ENCODE measurements at regions of chr1 and their contacts with region 1.

Region 1: GRCh38 chr1:160607011-160607671 is 27.8 kb upstream of the CD84 start:
- DNase-seq: peak; percentile 59
- H3K4me3 Mint-ChIP-seq: peak overlapping the region; percentile 48
- H3K27ac Mint-ChIP-seq: peak overlapping the region; percentile 75
- H3K4me1 Mint-ChIP-seq: peaks cover 64% of the 10 kb centered on the region
- H3K27me3 Mint-ChIP-seq: no peaks in the 10 kb centered on the region

Region 2: DNA sequence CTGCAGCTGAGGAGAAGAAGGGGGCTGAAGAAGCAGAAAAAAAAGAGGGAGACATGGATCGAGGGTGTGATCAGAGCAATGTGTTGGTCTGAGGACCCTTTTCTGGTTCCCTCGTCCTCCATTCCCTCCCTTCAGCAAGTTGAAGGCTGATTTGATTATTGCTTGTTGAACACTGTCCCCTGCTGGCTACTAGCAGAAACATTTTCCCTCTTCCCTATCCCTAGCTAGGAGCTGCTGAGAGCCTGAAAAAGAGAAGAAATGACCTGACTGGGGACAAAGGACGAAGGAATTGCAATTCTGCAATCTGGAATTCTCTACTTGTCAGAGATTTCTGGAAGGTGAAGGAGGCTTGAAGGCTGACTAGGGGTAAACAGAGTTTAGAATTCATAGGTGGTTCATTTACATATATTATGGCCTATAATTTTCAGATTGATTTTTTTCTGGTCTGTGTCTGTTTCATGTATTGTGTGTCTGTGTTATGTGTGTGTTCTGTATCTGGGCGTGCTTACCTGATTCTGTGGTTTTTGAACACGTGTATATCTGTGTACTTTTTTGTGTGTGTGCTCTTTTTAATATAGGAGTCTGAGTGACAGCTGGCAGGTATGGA is 230.5 kb before region 1 on chr1:
- intact Hi-C with region 1: loop called (anchors 1 kb)
- DNase-seq: peak; percentile 11
- H3K4me3 Mint-ChIP-seq: no peak overlapping the region
- H3K27ac Mint-ChIP-seq: no peak overlapping the region
- H3K4me1 Mint-ChIP-seq: peaks cover 13% of the 10 kb centered on the region
- H3K27me3 Mint-ChIP-seq: no peaks in the 10 kb centered on the region

Region 3: DNA sequence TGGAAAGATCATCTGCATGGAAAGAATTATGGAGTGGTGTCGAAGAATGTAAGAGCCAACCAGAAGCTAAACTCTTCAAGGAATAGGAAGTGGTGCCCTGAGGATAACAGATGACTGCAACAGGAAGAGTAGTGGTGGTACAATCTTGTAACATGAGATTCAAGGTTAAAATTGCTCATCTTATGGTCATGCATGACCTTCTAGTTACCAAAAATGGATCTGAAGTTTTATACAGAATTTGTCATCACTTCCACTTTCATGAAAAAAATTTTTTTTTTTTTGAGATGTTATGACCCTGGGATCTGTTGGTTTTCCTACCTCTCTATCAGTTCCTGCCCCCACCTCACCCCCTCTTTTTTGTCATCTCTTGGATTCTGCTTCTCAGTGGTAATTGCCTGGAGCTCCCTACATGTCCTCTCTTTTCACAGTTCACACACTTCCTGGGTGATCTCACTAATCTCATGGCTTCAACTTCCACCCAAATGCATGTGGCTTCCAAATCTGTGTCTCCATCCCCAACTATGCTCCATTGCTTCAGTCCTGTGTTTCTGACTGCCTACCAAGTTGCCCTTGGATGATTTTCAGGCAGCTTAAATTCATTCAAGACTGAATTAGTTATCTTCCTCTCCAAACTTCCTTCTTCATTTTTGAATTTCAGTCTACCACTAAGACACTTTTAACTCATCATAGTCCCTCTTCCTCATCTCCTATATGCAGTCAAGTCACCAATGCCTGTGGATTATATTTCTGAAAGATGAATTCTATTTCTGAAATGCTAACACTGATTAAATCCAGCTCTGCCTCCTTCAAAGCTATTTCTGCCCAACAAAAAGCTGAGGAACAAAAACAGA is 132.5 kb before region 1 on chr1:
- intact Hi-C with region 1: loop called (anchors 1 kb)
- DNase-seq: no peak
- H3K4me3 Mint-ChIP-seq: no peak overlapping the region
- H3K27ac Mint-ChIP-seq: no peak overlapping the region
- H3K4me1 Mint-ChIP-seq: no peaks in the 10 kb centered on the region
- H3K27me3 Mint-ChIP-seq: no peaks in the 10 kb centered on the region

Region 4: DNA sequence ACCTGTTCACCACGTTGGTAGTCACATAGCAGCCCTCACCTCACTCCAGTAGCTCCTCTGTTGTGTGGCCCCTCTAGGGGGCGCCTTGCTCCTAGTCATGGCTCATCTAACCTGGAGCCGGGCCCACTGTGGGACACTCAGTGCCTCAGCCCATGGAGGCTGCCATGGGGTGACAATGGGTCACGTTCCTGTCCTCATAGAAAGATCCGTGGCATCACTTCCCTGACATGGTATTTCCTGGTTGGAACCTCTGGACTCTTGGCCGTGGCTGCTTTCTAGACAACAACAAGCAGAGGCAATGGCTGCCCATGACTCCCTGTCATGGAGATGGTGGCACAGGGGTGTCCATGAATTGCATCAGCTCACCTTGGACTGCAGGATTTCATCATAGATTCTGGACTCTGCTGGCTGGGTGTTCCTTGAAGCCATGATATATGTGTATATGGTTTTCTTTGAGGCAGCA is 56.5 kb before region 1 on chr1:
- intact Hi-C with region 1: loop called (anchors 1 kb)
- DNase-seq: peak; percentile 16
- H3K4me3 Mint-ChIP-seq: no peak overlapping the region
- H3K27ac Mint-ChIP-seq: no peak overlapping the region
- H3K4me1 Mint-ChIP-seq: peaks cover 38% of the 10 kb centered on the region
- H3K27me3 Mint-ChIP-seq: no peaks in the 10 kb centered on the region

Region 5: GRCh38 chr1:160575112-160575664 is 32.0 kb before region 1 on chr1:
- intact Hi-C with region 1: loop called (anchors 1 kb)
- DNase-seq: no peak
- H3K4me3 Mint-ChIP-seq: peak overlapping the region; percentile 79
- H3K27ac Mint-ChIP-seq: peak overlapping the region; percentile 84
- H3K4me1 Mint-ChIP-seq: peaks cover 96% of the 10 kb centered on the region
- H3K27me3 Mint-ChIP-seq: no peaks in the 10 kb centered on the region

Region 6: GRCh38 chr1:160629286-160630210 is 22.4 kb after region 1 on chr1:
- intact Hi-C with region 1: no loop called
- DNase-seq: peak; percentile 76
- H3K4me3 Mint-ChIP-seq: peak overlapping the region; percentile 69
- H3K27ac Mint-ChIP-seq: peak overlapping the region; percentile 99
- H3K4me1 Mint-ChIP-seq: peaks cover 98% of the 10 kb centered on the region
- H3K27me3 Mint-ChIP-seq: no peaks in the 10 kb centered on the region

Measured in activated T-helper 1 cell treated with anti-CD3 and anti-CD28 coated beads, Interleukin-12 subunit alpha, Interleukin-12 subunit beta, Interleukin-2, Interleukin-4 antibody, amounts not matched to agents 30 ng/mL and 10 ng/mL and 1 ng/mL, durations not matched to agents 14 hours and 24 hours and 36 hours (primary cell).